HepG2 (cell line): ENCODE measurements at regions of chr5 and their contacts with region 1.

Region 1: GRCh38 chr5:41843456-41844370 is 26.5 kb downstream of the OXCT1 start:
- DNase-seq: peak; percentile 36
- ATAC-seq: peak; percentile 58
- H3K4me3 ChIP-seq: no peak overlapping the region
- H3K27ac ChIP-seq: no peak overlapping the region
- H3K4me1 ChIP-seq: no peaks in the 10 kb centered on the region
- H3K27me3 ChIP-seq: no peaks in the 10 kb centered on the region
- CTCF ChIP-seq: peak; percentile 72
- EP300 ChIP-seq: no peak
- POLR2A ChIP-seq: no peak
- RAD21 ChIP-seq: peak; percentile 38; the same call in 1 of the 2 replicates

Region 2: DNA sequence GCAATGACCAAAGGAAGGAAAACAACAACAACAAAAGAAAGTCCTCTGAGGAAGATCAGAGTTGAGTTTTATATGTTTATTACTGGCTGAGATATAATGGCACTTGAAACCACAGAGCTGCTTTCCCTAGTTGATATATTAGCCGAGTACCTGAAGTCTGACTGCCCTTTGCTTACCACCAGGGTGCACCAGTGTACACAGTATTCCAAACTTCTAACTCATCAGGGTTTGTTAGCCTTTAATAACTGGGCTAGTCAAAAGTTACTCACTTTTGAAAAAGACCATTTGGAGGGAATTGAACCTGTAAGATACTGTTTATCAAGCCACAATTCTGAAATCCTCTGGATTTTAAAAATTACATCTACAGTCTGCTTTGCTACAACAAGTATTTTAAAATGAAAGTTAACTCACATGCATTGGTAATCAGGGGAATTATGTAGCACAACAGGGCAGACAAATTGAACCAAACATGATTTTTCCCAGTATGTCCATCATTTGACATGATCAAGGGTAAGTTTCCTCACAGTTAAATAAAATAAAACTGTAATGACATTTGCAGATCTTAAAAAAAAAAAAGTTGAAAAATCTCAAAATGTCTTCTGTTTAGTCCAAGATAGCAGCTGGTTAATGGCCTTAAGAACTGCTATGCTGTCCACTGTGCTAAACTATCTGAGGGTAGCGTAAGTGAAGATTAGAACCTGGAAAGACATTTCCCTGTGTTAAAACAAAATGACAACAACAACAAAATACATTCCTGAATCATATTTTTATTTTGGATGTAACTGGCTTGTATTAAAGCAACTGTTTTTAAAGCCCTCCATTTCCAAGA is 573.1 kb before region 1 on chr5:
- CTCF ChIA-PET with region 1: interaction called, 14 read pairs
- POLR2A ChIA-PET with region 1: no interaction called
- in situ Hi-C with region 1: loop called (anchors 25 kb)
- intact Hi-C with region 1: loop called (anchors 1 kb)
- DNase-seq: peak; percentile 43
- ATAC-seq: peak; percentile 95
- H3K4me3 ChIP-seq: no peak overlapping the region
- H3K27ac ChIP-seq: no peak overlapping the region
- H3K4me1 ChIP-seq: no peaks in the 10 kb centered on the region
- H3K27me3 ChIP-seq: no peaks in the 10 kb centered on the region; a peak in 1 of 5 replicates
- CTCF ChIP-seq: peak; percentile 76
- EP300 ChIP-seq: no peak
- POLR2A ChIP-seq: no peak
- RAD21 ChIP-seq: peak; percentile 57; the same call in 1 of the 2 replicates

Region 3: GRCh38 chr5:41707853-41708603 is 135.7 kb before region 1 on chr5:
- CTCF ChIA-PET with region 1: interaction called, 12 read pairs
- POLR2A ChIA-PET with region 1: no interaction called
- in situ Hi-C with region 1: loop called (anchors 25 kb)
- intact Hi-C with region 1: loop called (anchors 1 kb)
- DNase-seq: peak; percentile 10
- ATAC-seq: peak; percentile 85
- H3K4me3 ChIP-seq: no peak overlapping the region
- H3K27ac ChIP-seq: no peak overlapping the region
- H3K4me1 ChIP-seq: no peaks in the 10 kb centered on the region
- H3K27me3 ChIP-seq: no peaks in the 10 kb centered on the region
- CTCF ChIP-seq: peak; percentile 32; the same call in 1 of the 2 replicates
- EP300 ChIP-seq: no peak
- POLR2A ChIP-seq: no peak
- RAD21 ChIP-seq: no peak

Region 4: DNA sequence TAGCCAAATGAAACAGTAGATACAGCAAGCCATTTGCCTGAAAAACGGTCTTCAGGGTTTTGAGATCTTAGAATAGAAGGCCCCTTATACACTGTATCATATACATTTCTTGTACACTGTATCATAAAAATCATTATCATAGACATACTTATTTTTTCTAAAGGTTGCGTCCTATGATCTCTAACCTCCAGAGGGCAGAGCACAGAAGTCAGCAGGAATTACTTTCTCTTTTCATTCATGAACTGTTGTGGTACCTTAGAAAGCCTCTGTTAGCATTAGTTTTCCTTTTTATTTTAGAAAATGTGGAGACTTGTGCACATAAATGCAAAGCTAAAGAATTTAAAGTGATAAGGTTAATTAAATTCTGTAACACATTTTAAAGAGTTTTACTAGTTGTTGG is 88.9 kb before region 1 on chr5:
- CTCF ChIA-PET with region 1: no interaction called
- POLR2A ChIA-PET with region 1: no interaction called
- in situ Hi-C with region 1: no loop called
- intact Hi-C with region 1: loop called (anchors 1 kb)
- DNase-seq: no peak
- ATAC-seq: peak; percentile 55
- H3K4me3 ChIP-seq: no peak overlapping the region
- H3K27ac ChIP-seq: no peak overlapping the region
- H3K4me1 ChIP-seq: no peaks in the 10 kb centered on the region
- H3K27me3 ChIP-seq: no peaks in the 10 kb centered on the region
- CTCF ChIP-seq: no peak
- EP300 ChIP-seq: no peak
- POLR2A ChIP-seq: no peak
- RAD21 ChIP-seq: no peak